Activated naive CD4-positive, alpha-beta T cell treated with anti-CD3 and anti-CD28 coated beads, Interleukin-2, amount 10 ng/mL, durations not matched to agents 7 days and 5 days (primary cell): ENCODE measurements at regions of chr7 and their contacts with region 1.

Region 1: GRCh38 chr7:36291387-36292316 is 98.0 kb upstream of the ANLN start:
- DNase-seq: peak; percentile 79
- H3K4me3 Mint-ChIP-seq: peak overlapping the region; percentile 27
- H3K27ac Mint-ChIP-seq: no peak overlapping the region
- H3K4me1 Mint-ChIP-seq: peaks cover 53% of the 10 kb centered on the region
- H3K27me3 Mint-ChIP-seq: peaks cover 6% of the 10 kb centered on the region

Region 2: DNA sequence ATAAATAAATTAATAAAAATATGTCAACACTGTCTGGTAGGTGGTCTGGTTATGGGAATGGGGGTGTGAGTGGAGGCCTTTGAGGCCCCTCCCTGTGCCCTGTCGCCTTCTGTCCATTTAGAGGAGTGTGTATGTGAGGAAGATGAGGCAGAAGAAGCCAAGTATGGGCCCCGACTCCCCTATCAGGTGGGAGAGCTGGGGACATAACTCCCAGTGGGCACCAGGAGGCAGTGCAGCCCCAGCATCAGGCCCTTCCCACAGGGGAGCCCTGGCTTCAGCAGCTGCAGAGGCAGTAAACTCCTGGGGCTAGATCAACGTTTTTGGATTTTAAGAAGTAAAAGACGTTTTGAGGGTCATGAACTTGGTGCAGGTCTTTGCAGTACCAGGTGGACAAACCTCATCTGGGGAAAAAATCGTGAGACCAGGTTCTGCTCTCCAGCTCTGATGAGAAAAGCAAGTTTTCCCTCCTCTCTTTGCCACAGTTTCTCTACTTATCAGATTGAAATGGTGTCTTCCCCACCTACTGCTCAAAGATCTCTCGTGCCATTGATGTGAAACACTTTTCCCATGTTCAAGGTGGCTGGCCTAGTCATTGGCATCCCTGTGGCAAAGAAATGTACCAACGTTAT is 306.4 kb before region 1 on chr7:
- CTCF ChIA-PET with region 1: interaction called, 91 read pairs
- DNase-seq: peak; percentile 83
- H3K4me3 Mint-ChIP-seq: no peak overlapping the region
- H3K27ac Mint-ChIP-seq: no peak overlapping the region
- H3K4me1 Mint-ChIP-seq: no peaks in the 10 kb centered on the region
- H3K27me3 Mint-ChIP-seq: peaks cover 10% of the 10 kb centered on the region

Region 3: GRCh38 chr7:36021367-36021766 is 270.3 kb before region 1 on chr7:
- CTCF ChIA-PET with region 1: interaction called, 19 read pairs
- DNase-seq: no peak
- H3K4me3 Mint-ChIP-seq: no peak overlapping the region
- H3K27ac Mint-ChIP-seq: no peak overlapping the region
- H3K4me1 Mint-ChIP-seq: no peaks in the 10 kb centered on the region
- H3K27me3 Mint-ChIP-seq: peaks cover 13% of the 10 kb centered on the region

Region 4: DNA sequence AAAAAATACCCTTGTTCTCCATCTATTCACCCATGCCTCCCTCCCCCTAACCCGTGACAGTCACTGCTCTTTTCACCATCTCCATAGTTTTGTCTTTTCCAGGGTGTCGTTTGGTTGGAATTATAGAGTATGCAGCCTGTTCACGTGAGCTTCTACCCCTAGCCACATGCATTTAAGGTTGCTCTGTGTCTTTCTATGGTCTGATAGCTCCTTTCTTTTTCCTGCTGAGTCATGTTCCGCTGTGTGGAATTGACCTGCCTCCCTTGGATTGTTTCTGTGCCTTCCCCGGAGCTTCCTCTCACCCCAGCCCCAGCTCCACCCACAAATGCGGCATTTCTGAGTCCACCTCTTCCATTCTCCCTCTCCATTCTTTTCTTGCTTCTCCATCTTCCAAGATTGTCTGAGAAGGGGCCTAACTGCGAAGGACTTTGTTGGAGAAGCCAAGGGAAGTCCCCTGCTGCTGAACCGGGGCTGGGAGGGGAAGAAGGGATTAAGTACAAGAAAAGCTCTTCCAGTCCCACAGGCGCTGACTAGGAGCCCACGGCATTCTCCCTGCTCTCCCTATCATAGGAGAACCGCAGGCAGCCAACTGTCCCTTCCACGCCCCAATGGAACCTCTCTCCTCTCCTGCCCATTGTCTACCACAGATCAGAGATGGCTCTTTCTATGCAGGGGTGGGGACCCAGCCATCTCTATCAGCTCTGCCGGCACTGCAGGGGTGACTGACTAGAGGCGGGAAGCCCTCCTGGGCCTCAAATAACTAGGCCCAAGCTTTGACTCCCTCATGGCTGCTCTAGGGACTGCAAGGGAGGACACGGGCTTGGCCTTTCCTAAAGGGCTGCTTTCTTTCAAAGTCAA is 10.5 kb after region 1 on chr7:
- CTCF ChIA-PET with region 1: interaction called, 17 read pairs
- DNase-seq: no peak
- H3K4me3 Mint-ChIP-seq: no peak overlapping the region
- H3K27ac Mint-ChIP-seq: no peak overlapping the region
- H3K4me1 Mint-ChIP-seq: no peaks in the 10 kb centered on the region
- H3K27me3 Mint-ChIP-seq: no peaks in the 10 kb centered on the region

Region 5: DNA sequence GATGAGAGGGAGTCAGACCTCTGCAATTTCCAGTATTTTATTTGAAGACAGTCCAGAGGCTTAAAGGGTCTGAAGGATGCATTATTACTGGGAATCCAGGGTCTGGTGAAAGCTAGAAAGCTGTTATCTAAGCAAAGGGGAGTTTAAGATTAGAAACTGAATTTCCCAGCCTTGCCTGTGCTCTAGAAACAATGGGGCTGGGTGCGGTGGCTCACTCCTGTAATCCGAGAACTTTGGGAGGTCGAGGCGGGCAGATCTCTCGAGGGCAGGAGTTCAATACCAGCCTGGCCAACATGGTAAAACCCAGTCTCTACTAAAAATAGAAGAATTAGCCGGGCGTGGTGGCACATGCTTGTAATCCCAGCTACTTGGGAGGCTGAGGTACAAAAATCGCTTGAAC is 26.5 kb after region 1 on chr7:
- CTCF ChIA-PET with region 1: interaction called, 10 read pairs
- DNase-seq: no peak
- H3K4me3 Mint-ChIP-seq: no peak overlapping the region
- H3K27ac Mint-ChIP-seq: no peak overlapping the region
- H3K4me1 Mint-ChIP-seq: peaks cover 2% of the 10 kb centered on the region
- H3K27me3 Mint-ChIP-seq: peaks cover 19% of the 10 kb centered on the region